ENCODE measurements at regions of chr6 and their contacts with region 1.

Region 1: DNA sequence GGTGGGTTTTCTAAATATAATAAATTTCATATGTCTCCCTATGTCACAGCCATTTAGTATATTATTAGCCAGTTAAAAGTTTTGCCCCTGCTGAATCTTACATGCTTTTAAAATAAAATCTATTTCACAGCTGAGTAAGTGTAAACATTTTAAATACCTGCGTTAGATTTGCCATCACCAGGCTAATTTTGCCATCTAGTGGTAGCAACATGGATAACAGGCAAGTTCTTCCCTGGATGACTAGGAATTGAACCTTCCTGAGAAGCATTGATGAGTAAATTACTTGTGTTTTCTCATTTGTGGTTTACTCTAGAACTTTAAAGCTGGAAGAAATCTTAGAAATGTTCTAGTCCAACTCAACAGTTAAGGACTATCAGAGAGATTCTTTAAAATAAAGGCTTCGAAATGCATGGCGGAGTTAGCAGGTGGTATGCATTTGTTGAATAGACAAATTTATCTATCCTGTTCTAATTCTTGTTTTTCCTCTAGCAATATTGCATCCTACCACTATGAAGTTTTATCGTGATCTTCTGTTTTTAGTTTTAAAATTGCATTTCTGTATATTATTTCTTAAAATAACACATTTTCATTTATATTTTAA is 2.6 kb downstream of the PRSS35 start:
- DNase-seq: peak; percentile 59
- H3K4me3 ChIP-seq: no peak overlapping the region
- H3K27ac ChIP-seq: no peak overlapping the region
- H3K27me3 ChIP-seq: no peaks in the 10 kb centered on the region
- CTCF ChIP-seq: peak; percentile 76

Region 2: DNA sequence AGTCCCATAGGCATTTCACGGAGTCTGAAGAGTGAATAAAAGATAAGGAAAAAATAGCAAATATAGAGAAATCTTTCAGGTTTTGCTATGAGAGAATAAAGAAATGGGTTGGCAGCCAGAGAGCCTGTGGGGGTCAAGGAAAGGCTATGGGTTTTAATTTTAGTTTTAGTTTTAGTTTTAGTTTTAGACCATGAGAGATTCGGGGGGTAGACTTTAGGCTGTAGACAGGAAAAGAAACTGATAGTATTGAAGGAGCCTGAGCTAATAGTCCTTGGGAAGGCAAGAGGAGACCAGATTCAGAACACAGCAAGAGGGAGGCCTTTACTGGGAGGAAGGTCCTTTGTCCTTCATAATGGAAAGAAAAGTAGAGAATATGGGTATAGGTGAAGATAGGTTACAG is 428.2 kb before region 1 on chr6:
- in situ Hi-C with region 1: loop called (anchors 25 kb)
- DNase-seq: no peak
- H3K4me3 ChIP-seq: no peak overlapping the region
- H3K27ac ChIP-seq: no peak overlapping the region
- H3K27me3 ChIP-seq: no peaks in the 10 kb centered on the region
- CTCF ChIP-seq: no peak

Region 3: GRCh38 chr6:83169511-83169910 is 345.5 kb before region 1 on chr6:
- in situ Hi-C with region 1: no loop called
- DNase-seq: no peak
- H3K4me3 ChIP-seq: no peak overlapping the region
- H3K27ac ChIP-seq: no peak overlapping the region
- H3K27me3 ChIP-seq: no peaks in the 10 kb centered on the region
- CTCF ChIP-seq: no peak

Region 4: GRCh38 chr6:83215131-83216047 is 299.6 kb before region 1 on chr6:
- in situ Hi-C with region 1: loop called (anchors 25 kb)
- DNase-seq: peak; percentile 84
- H3K4me3 ChIP-seq: no peak overlapping the region
- H3K27ac ChIP-seq: peak overlapping the region; percentile 62
- H3K27me3 ChIP-seq: no peaks in the 10 kb centered on the region
- CTCF ChIP-seq: peak; percentile 91

Region 5: DNA sequence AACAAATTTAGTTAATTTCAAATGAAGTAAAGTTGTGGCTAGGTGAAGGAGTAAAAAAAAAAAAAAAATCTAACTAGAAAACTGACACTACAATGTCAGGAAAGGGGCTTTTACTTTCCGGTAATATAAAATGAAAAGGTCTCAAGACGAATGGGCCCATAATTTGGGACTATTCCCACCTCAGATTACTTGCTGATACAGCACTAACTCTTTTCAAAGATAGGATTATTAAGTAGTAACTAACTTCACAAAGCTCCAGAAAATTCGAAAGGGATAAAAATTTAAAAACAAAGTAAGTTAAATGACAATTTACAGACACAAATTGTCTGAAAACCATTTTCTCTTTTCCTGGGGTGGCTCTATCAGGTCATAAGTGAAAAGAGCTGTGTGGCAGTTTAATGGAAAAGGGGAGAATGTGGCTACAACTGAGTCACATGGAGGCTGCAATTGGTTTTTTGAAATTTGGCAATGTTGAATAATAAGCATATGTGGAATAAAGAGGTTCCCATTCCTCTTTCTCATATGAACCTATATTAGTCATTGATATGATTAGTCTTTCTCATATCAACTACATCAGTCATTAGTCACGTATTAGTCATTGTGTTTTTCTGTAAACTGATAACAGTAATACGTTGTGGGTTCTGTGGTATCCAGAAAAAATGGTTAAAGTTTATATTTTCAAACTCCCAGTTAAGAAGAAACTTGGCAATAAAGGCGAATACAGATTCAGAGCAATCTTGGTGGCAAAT is 243.8 kb before region 1 on chr6:
- in situ Hi-C with region 1: no loop called
- DNase-seq: peak; percentile 44
- H3K4me3 ChIP-seq: no peak overlapping the region
- H3K27ac ChIP-seq: peak overlapping the region; percentile 30
- H3K27me3 ChIP-seq: no peaks in the 10 kb centered on the region
- CTCF ChIP-seq: no peak

Region 6: GRCh38 chr6:83758533-83758932 is 243.6 kb after region 1 on chr6:
- in situ Hi-C with region 1: no loop called
- DNase-seq: no peak
- H3K4me3 ChIP-seq: no peak overlapping the region
- H3K27ac ChIP-seq: no peak overlapping the region
- H3K27me3 ChIP-seq: no peaks in the 10 kb centered on the region
- CTCF ChIP-seq: no peak

Measured in brain microvascular endothelial cell (primary cell).